ENCODE measurements at regions of chr16 and their contacts with region 1.

Region 1: DNA sequence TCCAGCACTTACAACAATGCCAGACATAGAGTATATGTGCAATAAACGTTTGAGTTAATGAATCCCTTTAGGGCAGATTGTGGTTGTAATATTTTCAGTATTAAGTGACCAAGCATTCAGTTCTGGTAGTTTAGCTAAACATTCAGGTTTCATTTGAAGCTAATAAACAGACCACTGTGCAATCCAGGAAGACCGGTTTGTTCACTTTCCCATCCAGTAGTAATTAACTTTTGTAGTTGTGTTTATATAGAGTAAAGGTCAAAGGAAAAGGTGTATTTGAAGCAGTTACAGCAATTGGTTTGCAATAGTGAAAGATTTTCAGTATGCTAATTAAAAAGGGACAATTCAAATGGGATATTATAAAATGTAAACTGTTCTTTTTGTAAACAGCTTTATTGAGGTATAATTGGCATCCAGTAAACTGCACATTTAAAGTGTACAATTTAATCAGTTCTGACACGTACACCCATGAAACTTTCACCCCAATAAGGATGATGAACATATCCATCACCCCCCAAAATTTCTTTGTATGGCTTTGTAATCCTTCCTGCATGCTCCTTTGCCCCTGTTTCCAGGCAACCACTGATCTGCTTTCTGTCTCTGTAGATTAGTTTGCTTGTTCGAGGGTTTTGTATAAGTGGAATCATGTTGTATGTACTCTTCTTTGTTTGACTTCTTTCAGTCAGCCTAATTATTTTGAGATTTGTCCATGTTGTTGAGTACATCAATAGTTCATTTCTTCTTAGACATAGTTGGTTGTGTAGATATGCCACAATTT is 26.3 kb downstream of the MRTFB start:
- DNase-seq: no peak
- ATAC-seq: peak; percentile 39

Region 2: GRCh38 chr16:14050297-14051036 is 46.9 kb before region 1 on chr16:
- intact Hi-C with region 1: no loop called
- DNase-seq: no peak
- ATAC-seq: no peak

Region 3: GRCh38 chr16:14121142-14121541 is 23.8 kb after region 1 on chr16:
- intact Hi-C with region 1: no loop called
- DNase-seq: no peak
- ATAC-seq: no peak

Region 4: GRCh38 chr16:14186007-14186794 is 88.8 kb after region 1 on chr16:
- intact Hi-C with region 1: loop called (anchors 10 kb)
- DNase-seq: no peak
- ATAC-seq: peak; percentile 62